ENCODE measurements at regions of chr12 and their contacts with region 1.

Region 1: DNA sequence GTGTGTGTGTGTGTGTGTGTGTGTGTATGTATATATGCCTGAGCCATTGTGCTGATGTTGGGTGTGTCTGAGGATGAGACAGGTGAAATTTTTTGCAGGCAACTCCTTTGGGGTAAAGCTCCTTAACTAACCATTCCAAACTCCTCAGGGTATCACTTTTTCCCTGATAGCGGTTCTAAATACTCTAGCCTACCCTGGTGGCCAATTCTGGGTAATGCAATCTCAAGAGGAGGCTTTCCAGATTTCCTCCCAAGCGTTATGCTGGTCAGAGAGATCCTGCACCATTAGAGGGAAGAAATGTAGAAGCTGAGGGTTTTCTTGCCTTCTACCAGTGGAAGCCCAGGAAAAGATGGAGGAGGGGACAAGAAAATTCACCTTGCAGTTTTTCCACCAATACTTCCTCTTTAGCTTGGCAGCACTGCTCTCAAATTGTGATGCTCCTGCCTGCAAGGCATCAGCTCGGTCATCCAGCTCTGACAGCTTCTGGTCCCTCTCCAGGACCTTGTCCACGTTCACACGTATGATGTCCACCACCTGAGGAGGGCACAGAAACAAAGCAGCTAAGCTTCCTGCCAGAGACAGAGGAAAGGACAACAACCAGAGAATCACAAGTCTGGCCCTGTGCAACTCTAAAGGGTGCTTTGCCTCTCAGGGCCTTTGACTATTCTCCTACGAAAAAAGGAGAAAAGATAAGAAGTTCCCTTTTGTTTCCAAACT is 4.9 kb downstream of the VAMP1 start:
- DNase-seq: peak; percentile 68
- H3K27ac ChIP-seq: no peak overlapping the region
- CTCF ChIP-seq: peak; percentile 64

Region 2: GRCh38 chr12:6423267-6424007 is 42.2 kb before region 1 on chr12:
- CTCF ChIA-PET with region 1: interaction called, 29 read pairs
- POLR2A ChIA-PET with region 1: interaction called, 3 read pairs
- DNase-seq: peak; percentile 76
- H3K27ac ChIP-seq: no peak overlapping the region
- CTCF ChIP-seq: peak; percentile 69

Measured in RWPE1 (cell line).